Activated naive CD8-positive, alpha-beta T cell treated with anti-CD3 and anti-CD28 coated beads, Interleukin-2, amount 10 ng/mL, durations not matched to agents 7 days and 5 days (primary cell): ENCODE measurements at regions of chr1 and their contacts with region 1.

Region 1: GRCh38 chr1:113855630-113856400 is 15.7 kb downstream of the PTPN22 start:
- DNase-seq: no peak
- ATAC-seq: no peak
- H3K4me3 Mint-ChIP-seq: no peak overlapping the region
- H3K27ac Mint-ChIP-seq: no peak overlapping the region
- H3K4me1 Mint-ChIP-seq: peaks cover 25% of the 10 kb centered on the region
- H3K27me3 Mint-ChIP-seq: no peaks in the 10 kb centered on the region

Region 2: GRCh38 chr1:113830039-113830438 is 25.8 kb before region 1 on chr1:
- POLR2A ChIA-PET with region 1: interaction called, 11 read pairs
- DNase-seq: no peak
- ATAC-seq: no peak
- H3K4me3 Mint-ChIP-seq: no peak overlapping the region
- H3K27ac Mint-ChIP-seq: no peak overlapping the region
- H3K4me1 Mint-ChIP-seq: no peaks in the 10 kb centered on the region
- H3K27me3 Mint-ChIP-seq: no peaks in the 10 kb centered on the region